ENCODE measurements at regions of chr11 and their contacts with region 1.

Region 1: GRCh38 chr11:65540297-65541092 is 15.6 kb downstream of the SCYL1 start:
- DNase-seq: peak; percentile 98
- CTCF ChIP-seq: peak; percentile 81

Region 2: GRCh38 chr11:65506770-65507505 is 33.6 kb before region 1 on chr11:
- CTCF ChIA-PET with region 1: interaction called, 6 read pairs
- POLR2A ChIA-PET with region 1: interaction called, 15 read pairs
- DNase-seq: no peak
- CTCF ChIP-seq: no peak

Region 3: GRCh38 chr11:65551572-65552398 is 11.3 kb after region 1 on chr11:
- CTCF ChIA-PET with region 1: interaction called, 30 read pairs
- POLR2A ChIA-PET with region 1: interaction called, 3 read pairs
- DNase-seq: peak; percentile 75
- CTCF ChIP-seq: peak; percentile 84

Region 4: GRCh38 chr11:65569973-65570918 is 29.8 kb after region 1 on chr11 and contains the start of gene ZNRD2:
- CTCF ChIA-PET with region 1: interaction called, 86 read pairs
- POLR2A ChIA-PET with region 1: no interaction called
- DNase-seq: peak; percentile 96
- CTCF ChIP-seq: peak; percentile 69

Region 5: GRCh38 chr11:65588199-65589054 is 47.9 kb after region 1 on chr11:
- CTCF ChIA-PET with region 1: interaction called, 54 read pairs
- POLR2A ChIA-PET with region 1: no interaction called
- DNase-seq: peak; percentile 95
- CTCF ChIP-seq: peak; percentile 72

Region 6: GRCh38 chr11:65615229-65615941 is 74.9 kb after region 1 on chr11 and contains the start of gene PCNX3:
- CTCF ChIA-PET with region 1: interaction called, 13 read pairs
- POLR2A ChIA-PET with region 1: no interaction called
- DNase-seq: peak; percentile 100
- CTCF ChIP-seq: no peak

Measured in GM10248 (cell line).